GM12878 (cell line): ENCODE measurements at regions of chr10 and their contacts with region 1.

Region 1: GRCh38 chr10:123945325-123945920 is 53.8 kb upstream of the CPXM2 start:
- DNase-seq: no peak
- ATAC-seq: peak; percentile 59
- H3K4me3 ChIP-seq: no peak overlapping the region
- H3K27ac ChIP-seq: no peak overlapping the region
- H3K4me1 ChIP-seq: no peaks in the 10 kb centered on the region
- H3K27me3 ChIP-seq: no peaks in the 10 kb centered on the region; a peak in 1 of 4 replicates
- CTCF ChIP-seq: no peak
- EP300 ChIP-seq: no peak
- POLR2A ChIP-seq: no peak
- RAD21 ChIP-seq: no peak

Region 2: GRCh38 chr10:123848564-123849457 is 96.6 kb before region 1 on chr10:
- CTCF ChIA-PET with region 1: no interaction called
- POLR2A ChIA-PET with region 1: no interaction called
- RAD21 ChIA-PET with region 1: no interaction called
- SMC1A ChIA-PET with region 1: no interaction called
- in situ Hi-C with region 1: no loop called
- intact Hi-C with region 1: no loop called
- DNase-seq: peak; percentile 63
- ATAC-seq: peak; percentile 86
- H3K4me3 ChIP-seq: no peak overlapping the region
- H3K27ac ChIP-seq: peak overlapping the region; percentile 39; the same call in 1 of the 2 replicates
- H3K4me1 ChIP-seq: peaks cover 3% of the 10 kb centered on the region; the same call in 1 of the 2 replicates
- H3K27me3 ChIP-seq: no peaks in the 10 kb centered on the region
- CTCF ChIP-seq: no peak
- EP300 ChIP-seq: peak; percentile 78 to 92
- POLR2A ChIP-seq: no peak
- RAD21 ChIP-seq: no peak

Region 3: GRCh38 chr10:124221356-124222317 is 276.2 kb after region 1 on chr10:
- CTCF ChIA-PET with region 1: no interaction called
- POLR2A ChIA-PET with region 1: no interaction called
- RAD21 ChIA-PET with region 1: no interaction called
- SMC1A ChIA-PET with region 1: no interaction called
- in situ Hi-C with region 1: no loop called
- intact Hi-C with region 1: no loop called
- DNase-seq: peak; percentile 83
- ATAC-seq: peak; percentile 90
- H3K4me3 ChIP-seq: peak overlapping the region; percentile 43; the same call in 1 of the 2 replicates
- H3K27ac ChIP-seq: peak overlapping the region; percentile 81
- H3K4me1 ChIP-seq: peaks cover 31% of the 10 kb centered on the region
- H3K27me3 ChIP-seq: no peaks in the 10 kb centered on the region
- CTCF ChIP-seq: no peak
- EP300 ChIP-seq: peak; percentile 88 to 90; a peak in 3 of 4 replicates
- POLR2A ChIP-seq: 0 out of 2 replicates have a peak, but pooled peaks have one; percentile 25
- RAD21 ChIP-seq: no peak

Region 4: DNA sequence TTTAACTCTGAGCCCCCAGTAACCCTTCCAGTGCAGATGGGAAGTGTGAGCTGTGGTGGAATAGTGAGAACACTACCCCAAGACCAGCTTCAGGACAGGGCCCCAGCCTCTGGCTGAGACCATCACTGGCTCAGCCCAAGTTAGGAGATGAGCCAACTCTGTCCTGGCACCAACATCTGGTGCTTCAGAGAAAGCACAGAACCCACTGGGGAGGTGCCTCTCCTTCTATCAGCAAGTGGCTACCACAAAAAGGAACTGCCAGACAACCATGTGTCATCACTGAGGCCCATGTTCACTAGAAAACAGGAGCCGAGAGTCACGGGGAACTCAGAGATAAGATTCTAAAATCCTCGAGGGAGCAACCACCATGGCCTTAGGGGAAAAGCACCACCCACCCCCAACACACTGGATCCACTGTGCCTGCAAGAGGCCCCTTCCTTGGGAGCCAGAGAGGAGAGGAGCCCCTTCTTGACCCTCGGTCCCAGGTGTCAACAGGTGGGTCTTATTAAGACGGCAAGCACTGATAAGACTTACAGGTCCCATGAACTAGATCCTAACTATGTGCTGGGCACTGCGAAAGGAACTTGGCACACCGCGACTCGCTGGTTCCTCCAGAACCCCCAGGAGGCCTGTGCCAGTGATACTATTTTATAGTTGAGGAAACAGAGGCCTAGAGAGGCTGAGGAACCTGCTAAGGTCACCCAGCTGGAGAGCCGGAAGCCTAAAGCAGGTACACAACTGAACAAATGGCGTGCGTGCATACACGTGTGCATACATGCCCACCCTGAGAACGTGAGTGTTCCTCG is 696.1 kb after region 1 on chr10:
- CTCF ChIA-PET with region 1: no interaction called
- POLR2A ChIA-PET with region 1: interaction called, 10 read pairs
- RAD21 ChIA-PET with region 1: no interaction called
- SMC1A ChIA-PET with region 1: no interaction called
- in situ Hi-C with region 1: no loop called
- intact Hi-C with region 1: no loop called
- DNase-seq: peak; percentile 32
- ATAC-seq: peak; percentile 75
- H3K4me3 ChIP-seq: peak overlapping the region; percentile 1; the same call in 1 of the 2 replicates
- H3K27ac ChIP-seq: peak overlapping the region; percentile 75
- H3K4me1 ChIP-seq: peaks cover 24% of the 10 kb centered on the region
- H3K27me3 ChIP-seq: no peaks in the 10 kb centered on the region
- CTCF ChIP-seq: no peak
- EP300 ChIP-seq: peak in 1 of 2 experiments; percentile 66; a peak in 1 of 4 replicates
- POLR2A ChIP-seq: no peak
- RAD21 ChIP-seq: no peak